ENCODE measurements at regions of chr19 and their contacts with region 1.

Region 1: DNA sequence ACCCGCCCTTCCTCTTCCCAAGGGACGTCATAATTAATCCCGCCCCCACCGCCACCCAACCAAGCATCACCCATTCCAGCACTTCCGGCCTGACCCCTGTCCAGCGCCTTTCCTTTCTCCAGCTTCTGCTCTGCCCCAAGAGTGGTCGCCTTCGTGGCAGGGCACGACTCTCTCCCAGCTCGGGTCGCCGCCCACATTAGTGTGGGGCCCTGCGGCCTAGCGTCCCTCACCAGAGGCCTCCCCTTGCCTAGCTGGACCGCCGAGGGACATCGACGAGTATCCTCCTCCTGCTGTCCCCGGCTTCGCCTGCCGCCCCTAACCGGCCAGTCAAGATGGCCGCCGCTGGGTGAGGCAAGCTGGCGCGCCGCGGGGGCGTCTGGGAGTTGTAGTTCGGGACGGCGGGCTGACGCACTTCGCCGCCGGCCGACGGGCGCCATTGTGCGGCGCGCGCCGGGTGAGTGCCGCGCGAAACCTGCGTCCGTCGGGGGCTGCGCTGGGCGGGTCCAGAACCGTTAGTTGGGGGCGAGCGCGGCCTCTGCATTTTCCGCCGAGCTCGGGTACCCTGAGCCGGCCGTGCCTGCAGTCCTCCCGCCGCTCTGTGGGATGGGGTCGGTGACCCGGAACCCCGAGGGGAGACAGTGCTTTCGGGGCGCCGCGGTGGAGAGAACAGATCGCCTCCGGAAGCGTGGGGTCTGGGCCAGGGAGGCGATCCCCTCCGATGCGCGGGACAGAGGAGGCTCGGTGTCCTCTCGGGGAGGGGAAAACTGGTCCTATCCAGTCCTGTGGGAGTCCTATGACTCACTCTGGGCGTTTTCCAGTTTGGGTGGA is at the start of gene ZNF274:
- DNase-seq: peak; percentile 77 to 98 (median 88)

Region 2: GRCh38 chr19:57947208-57948134 is 235.7 kb before region 1 on chr19 and contains the start of gene ZNF256:
- intact Hi-C with region 1: no loop called
- DNase-seq: peak; percentile 87 to 99 (median 97)

Region 3: DNA sequence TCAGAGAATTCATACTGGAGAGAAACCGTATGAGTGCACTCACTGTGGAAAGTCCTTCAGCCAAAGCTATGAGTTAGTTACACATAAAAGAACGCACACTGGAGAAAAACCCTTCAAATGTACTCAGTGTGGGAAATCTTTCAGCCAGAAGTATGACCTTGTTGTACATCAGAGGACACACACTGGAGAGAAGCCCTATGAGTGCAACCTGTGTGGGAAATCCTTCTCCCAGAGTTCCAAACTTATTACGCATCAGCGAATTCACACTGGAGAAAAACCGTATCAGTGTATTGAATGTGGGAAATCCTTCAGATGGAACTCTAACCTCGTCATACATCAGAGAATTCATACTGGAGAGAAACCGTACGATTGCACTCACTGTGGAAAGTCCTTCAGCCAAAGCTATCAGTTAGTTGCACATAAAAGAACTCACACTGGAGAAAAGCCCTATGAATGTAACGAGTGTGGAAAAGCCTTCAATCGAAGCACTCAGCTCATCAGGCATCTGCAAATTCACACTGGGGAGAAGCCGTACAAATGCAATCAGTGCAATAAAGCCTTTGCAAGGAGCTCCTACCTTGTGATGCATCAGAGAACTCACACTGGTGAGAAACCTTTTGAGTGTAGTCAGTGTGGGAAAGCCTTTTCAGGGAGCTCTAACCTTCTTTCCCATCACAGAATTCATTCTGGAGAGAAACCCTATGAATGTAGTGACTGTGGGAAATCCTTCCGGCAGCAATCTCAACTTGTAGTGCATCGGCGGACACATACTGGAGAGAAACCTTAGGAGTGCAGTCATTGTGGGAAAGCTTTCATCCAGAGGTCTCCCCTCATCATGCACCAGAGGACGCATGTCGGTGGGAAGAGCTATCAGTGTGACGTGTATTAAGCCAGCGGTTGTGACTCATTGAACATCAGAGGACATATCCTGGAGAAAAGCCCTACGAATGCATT is 79.0 kb after region 1 on chr19:
- intact Hi-C with region 1: no loop called
- DNase-seq: peak in 1 of 10 donors; percentile 15

Region 4: GRCh38 chr19:58278157-58279041 is 95.2 kb after region 1 on chr19 and contains the start of gene ZNF8:
- intact Hi-C with region 1: loop called (anchors 5 kb)
- DNase-seq: peak; percentile 95 to 99 (median 96)

Measured in posterior cingulate gyrus (tissue), 11 donors.